ENCODE measurements at regions of chr6 and their contacts with region 1.

Region 1: DNA sequence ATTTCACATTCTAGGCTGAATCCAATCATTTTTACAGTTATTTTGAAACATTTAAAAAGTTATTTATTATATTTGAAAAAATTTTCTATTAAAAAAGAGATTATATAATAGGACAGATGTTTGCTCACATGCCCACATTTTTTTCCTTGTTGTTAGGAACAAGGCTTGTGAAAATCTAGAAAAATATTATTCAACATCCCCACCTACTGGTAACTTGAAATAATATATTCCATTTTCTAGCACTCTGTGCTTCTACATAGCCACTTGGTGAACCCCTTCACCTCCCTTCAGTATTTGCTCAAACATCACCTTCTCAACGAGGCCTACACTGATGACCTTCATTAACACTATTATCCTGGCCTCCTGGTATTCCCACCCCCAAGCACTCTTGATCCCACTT is 18.3 kb upstream of the GPRC6A start:
- DNase-seq: peak; percentile 35
- ATAC-seq: peak; percentile 80
- H3K4me3 ChIP-seq: no peak overlapping the region
- H3K27ac ChIP-seq: no peak overlapping the region
- H3K4me1 ChIP-seq: no peaks in the 10 kb centered on the region
- H3K27me3 ChIP-seq: no peaks in the 10 kb centered on the region
- CTCF ChIP-seq: peak; percentile 12 to 51 (median 30); a peak in 4 of 6 replicates
- POLR2A ChIP-seq: no peak
- RAD21 ChIP-seq: peak; percentile 60

Region 2: GRCh38 chr6:116779573-116780164 is 67.6 kb before region 1 on chr6:
- CTCF ChIA-PET with region 1: interaction called, 4 read pairs
- POLR2A ChIA-PET with region 1: no interaction called
- RAD21 ChIA-PET with region 1: no interaction called
- intact Hi-C with region 1: loop called (anchors 1 kb)
- DNase-seq: peak; percentile 28
- ATAC-seq: peak; percentile 76
- H3K4me3 ChIP-seq: no peak overlapping the region
- H3K27ac ChIP-seq: no peak overlapping the region
- H3K4me1 ChIP-seq: 0 out of 4 replicates have a peak, but pooled peaks cover 0 to 3% of the 10 kb centered on the region in 2 experiments
- H3K27me3 ChIP-seq: no peaks in the 10 kb centered on the region
- CTCF ChIP-seq: peak; percentile 24 to 64 (median 46); a peak in 4 of 6 replicates
- POLR2A ChIP-seq: no peak
- RAD21 ChIP-seq: peak; percentile 57

Region 3: GRCh38 chr6:116975600-116975999 is 128.4 kb after region 1 on chr6:
- CTCF ChIA-PET with region 1: no interaction called
- POLR2A ChIA-PET with region 1: no interaction called
- RAD21 ChIA-PET with region 1: no interaction called
- intact Hi-C with region 1: no loop called
- DNase-seq: no peak
- ATAC-seq: no peak
- H3K4me3 ChIP-seq: no peak overlapping the region
- H3K27ac ChIP-seq: no peak overlapping the region
- H3K4me1 ChIP-seq: no peaks in the 10 kb centered on the region
- H3K27me3 ChIP-seq: no peaks in the 10 kb centered on the region
- CTCF ChIP-seq: no peak
- POLR2A ChIP-seq: no peak
- RAD21 ChIP-seq: no peak

Region 4: DNA sequence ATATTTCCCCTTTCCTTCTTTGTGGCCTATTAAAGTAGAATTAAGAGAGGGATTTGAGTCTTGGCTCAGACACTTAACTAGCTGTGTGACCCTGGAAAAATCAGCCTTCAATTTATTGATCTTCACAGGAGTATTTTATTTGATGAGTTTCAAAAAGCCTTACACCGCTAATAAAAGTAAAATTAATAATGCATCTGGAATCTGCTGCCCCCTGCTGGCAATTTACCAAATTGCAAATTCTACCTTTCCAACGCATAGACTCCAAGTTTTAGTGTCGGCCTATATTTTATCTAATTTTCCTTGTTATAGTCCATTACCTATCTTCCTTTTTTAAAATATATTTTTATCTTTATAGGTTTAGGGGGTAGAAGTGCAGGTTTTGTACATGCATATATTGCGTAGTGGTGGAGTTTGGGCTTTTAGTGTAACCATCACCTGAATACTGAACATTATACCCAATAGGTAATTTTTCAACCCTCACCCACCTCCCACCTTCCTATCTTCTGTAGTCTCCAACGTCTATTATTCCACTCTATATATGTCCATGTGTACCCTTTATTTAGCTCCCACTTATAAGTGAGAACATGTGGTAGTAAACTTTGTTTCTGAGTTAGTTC is 708.8 kb after region 1 on chr6:
- CTCF ChIA-PET with region 1: no interaction called
- POLR2A ChIA-PET with region 1: no interaction called
- RAD21 ChIA-PET with region 1: no interaction called
- intact Hi-C with region 1: no loop called
- DNase-seq: no peak
- ATAC-seq: peak; percentile 58
- H3K4me3 ChIP-seq: no peak overlapping the region
- H3K27ac ChIP-seq: no peak overlapping the region
- H3K4me1 ChIP-seq: peaks cover under 1 to 7% of the 10 kb centered on the region in 2 experiments; a peak in 2 of 4 replicates
- H3K27me3 ChIP-seq: no peaks in the 10 kb centered on the region
- CTCF ChIP-seq: peak; percentile 61 to 87 (median 77); a peak in 5 of 6 replicates
- POLR2A ChIP-seq: no peak
- RAD21 ChIP-seq: peak; percentile 83